ENCODE measurements at regions of chr17 and their contacts with region 1.

Region 1: DNA sequence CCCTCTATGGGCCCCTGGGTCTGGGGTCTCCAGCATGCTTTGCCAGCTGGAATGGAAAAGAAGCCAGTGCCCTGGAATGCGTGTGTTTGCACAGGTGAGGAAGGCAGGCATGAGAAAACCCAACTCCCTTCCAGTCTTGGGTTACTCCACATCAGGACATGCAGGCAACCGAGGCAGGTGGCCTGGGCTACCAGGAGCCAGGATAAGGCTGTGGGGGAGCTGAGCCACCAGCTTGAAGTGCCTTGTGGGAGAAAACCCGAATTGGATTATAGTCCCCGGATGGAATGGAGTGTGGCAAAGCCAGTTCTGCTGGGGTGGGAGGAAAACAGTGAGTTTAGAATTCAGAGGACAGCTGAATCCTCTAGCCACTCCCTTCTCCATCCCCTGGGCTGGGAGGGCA is 7.2 kb downstream of the SRCIN1 start:
- H3K4me3 Mint-ChIP-seq: no peak overlapping the region
- H3K27ac Mint-ChIP-seq: no peak overlapping the region
- H3K4me1 Mint-ChIP-seq: peaks cover 19% of the 10 kb centered on the region
- H3K27me3 Mint-ChIP-seq: peaks cover 100% of the 10 kb centered on the region

Region 2: GRCh38 chr17:38415250-38416194 is 183.0 kb before region 1 on chr17:
- intact Hi-C with region 1: no loop called
- H3K4me3 Mint-ChIP-seq: no peak overlapping the region
- H3K27ac Mint-ChIP-seq: no peak overlapping the region
- H3K4me1 Mint-ChIP-seq: peaks cover 30% of the 10 kb centered on the region
- H3K27me3 Mint-ChIP-seq: peaks cover 43% of the 10 kb centered on the region

Region 3: GRCh38 chr17:38656959-38657823 is 58.7 kb after region 1 on chr17:
- intact Hi-C with region 1: loop called (anchors 10 kb)
- H3K4me3 Mint-ChIP-seq: no peak overlapping the region
- H3K27ac Mint-ChIP-seq: no peak overlapping the region
- H3K4me1 Mint-ChIP-seq: peaks cover 58% of the 10 kb centered on the region
- H3K27me3 Mint-ChIP-seq: peaks cover 65% of the 10 kb centered on the region

Region 4: DNA sequence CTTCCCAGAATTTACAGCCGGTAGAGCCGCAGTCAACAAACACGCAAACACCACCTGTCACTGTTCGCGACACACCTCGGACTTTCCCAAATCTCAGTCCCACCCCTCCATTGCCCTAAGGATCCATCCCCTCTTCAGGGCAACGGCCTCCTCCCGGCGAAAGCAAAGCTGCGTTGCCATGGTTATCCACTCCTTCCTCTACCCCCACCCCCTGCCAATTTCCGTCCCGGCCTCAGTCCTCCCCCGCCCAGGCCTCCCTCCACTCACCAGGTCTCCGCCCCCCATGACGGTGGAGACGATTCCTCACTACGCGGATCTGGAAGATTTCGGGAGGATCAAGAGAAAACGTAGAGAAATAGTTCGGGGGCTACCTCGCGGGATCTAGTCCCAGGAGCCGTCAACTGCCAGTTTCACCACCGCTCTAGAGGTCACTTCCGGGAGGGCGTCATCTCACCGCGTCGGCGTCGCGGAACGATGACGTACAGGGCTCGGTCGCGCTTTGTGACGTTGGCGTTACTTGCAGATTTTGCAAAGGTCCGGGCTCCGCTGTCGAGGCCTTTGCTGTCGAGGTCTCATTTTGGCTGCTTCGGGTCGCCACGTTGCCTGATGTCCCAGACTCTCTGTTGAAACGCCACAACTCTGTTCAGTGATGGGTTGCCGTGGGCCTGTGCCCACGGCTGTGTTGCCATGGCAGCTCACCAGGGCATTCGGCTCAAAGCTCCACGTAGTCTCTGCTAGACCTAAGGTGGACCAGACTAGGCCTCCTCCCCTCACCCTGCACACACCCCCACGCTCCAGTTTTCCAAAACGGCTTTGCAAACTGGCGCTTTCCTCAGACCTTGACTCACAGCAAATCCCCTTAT is 226.6 kb after region 1 on chr17 and contains the start of gene CWC25:
- intact Hi-C with region 1: no loop called
- H3K4me3 Mint-ChIP-seq: peak within 1 kb of the TSS; percentile 98
- H3K27ac Mint-ChIP-seq: peak within 1 kb of the TSS; percentile 100
- H3K4me1 Mint-ChIP-seq: peaks cover 29% of the 10 kb centered on the region
- H3K27me3 Mint-ChIP-seq: peaks cover 3% of the 10 kb centered on the region

Measured in dendritic cell treated with granulocyte-macrophage colony-stimulating factor and Interleukin-4, amounts not matched to agents 40 ng/mL and 50 ng/mL, for 4 days (primary cell).